ENCODE measurements at regions of chr2 and their contacts with region 1.

Region 1: GRCh38 chr2:178193823-178194599 is at the start of gene OSBPL6:
- DNase-seq: peak; percentile 69 to 81
- ATAC-seq: peak; percentile 96
- total RNA-seq, gene OSBPL6: 1.8 to 1.9 TPM

Region 2: GRCh38 chr2:178136321-178137025 is 57.5 kb before region 1 on chr2:
- intact Hi-C with region 1: loop called in 1 of 2 experiments (anchors 10 kb)
- DNase-seq: no peak
- ATAC-seq: no peak

Measured in left colon (tissue), 2 donors.